MCF 10A (cell line): ENCODE measurements at regions of chr12 and their contacts with region 1.

Region 1: DNA sequence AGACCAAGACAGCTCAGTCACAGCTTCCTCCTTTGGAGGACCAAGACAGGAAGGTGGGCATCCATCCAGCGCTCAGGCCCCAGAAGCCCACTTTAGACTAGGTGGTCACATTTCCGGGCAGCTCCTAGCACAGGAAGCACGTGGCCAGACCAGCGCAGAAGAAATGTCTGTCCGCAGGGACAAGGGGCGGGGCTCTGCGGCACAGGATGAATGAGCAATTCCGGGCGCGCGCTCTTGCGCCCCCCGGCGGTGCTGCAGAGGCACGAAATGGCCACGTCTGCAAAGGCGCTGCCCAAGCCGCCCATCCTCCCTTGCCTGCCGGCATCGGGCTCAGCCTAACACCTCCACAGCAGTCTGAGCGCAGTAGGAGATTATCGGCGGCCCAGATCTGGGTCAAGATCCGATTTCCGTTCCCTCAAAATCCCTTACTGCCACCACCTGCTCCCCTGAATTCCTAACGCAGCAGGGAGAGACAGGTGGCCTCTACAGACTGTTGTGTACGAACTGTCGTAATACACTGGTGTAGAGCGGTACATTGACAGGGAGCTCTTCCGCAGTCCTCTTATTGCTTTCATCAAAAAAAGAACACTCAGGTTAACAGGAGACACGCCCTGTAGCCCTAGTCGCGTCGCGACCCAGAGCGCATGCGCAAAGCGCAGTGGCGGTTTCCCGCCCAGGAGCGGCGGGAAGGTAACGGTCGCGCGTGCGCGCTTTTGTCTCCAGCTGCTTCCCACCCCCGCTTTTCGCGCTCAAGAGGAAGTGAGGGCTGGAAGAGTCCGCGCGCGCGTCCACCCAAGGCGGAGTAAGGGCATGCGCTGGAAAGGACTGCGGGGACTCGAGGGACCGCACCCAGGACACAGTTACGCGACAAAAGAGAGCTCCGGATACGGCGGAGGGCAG is 794 bp downstream of the TUBA1B start:
- DNase-seq: peak; percentile 91
- H3K4me3 Mint-ChIP-seq: peak overlapping the region; percentile 94
- H3K27ac Mint-ChIP-seq: peak overlapping the region; percentile 96
- H3K4me1 Mint-ChIP-seq: no peaks in the 10 kb centered on the region
- H3K27me3 Mint-ChIP-seq: no peaks in the 10 kb centered on the region
- CTCF ChIP-seq: peak; percentile 91

Region 2: DNA sequence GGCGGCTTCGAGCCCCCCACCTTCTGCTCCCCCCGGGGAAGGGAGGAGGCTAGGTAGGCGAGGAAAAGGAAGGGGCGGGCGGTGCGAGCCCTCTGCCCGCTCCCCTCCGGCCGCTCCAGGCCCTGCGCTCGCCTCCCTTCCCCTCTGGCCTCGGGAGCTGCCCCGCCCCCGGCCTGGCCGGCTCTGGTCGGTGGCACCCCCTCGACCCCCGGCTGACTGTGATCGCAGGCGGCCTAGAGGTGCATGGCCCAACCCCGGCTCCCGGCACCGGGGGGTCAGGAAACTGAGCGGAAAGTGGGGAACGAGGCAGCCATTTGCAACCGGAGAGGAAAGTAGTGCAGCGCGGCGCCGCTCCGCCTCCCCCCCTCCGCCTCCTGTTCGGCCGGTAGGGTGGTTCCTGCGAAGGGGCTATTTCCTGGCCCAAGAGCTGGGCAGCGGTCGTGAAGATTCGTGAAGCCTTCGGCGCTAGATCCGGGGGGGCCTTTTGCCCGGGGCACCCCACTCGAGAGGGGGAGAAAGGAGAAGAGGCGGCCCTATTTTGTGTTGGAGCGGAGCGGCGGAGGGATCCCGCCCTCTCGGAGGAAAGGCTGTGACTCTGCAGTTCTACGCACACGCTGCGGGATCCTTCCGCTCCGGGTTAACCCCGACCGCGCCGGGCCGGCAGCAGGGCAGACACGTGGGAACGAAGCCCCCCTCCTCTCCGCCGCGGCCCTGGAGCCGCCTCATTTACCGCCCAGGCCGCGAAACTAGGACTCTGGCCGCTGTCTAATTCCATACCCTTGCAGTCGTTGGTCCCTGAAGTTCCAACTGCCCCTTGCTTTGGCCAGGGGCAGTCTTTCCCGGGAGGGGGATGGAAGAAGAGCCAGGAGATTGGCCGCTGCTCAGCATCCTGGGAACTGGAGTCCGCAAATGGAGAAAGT is 69.9 kb before region 1 on chr12 and contains the start of gene KMT2D:
- CTCF ChIA-PET with region 1: interaction called, 9 read pairs
- POLR2A ChIA-PET with region 1: interaction called, 58 read pairs
- intact Hi-C with region 1: loop called (anchors 2 kb)
- DNase-seq: peak; percentile 91
- H3K4me3 Mint-ChIP-seq: peak within 1 kb of the TSS; percentile 91
- H3K27ac Mint-ChIP-seq: peak within 1 kb of the TSS; percentile 89
- H3K4me1 Mint-ChIP-seq: peaks cover 32% of the 10 kb centered on the region
- H3K27me3 Mint-ChIP-seq: no peaks in the 10 kb centered on the region
- CTCF ChIP-seq: no peak
- total RNA-seq, gene KMT2D: 76.9 and 92.5 TPM in 2 replicates

Region 3: DNA sequence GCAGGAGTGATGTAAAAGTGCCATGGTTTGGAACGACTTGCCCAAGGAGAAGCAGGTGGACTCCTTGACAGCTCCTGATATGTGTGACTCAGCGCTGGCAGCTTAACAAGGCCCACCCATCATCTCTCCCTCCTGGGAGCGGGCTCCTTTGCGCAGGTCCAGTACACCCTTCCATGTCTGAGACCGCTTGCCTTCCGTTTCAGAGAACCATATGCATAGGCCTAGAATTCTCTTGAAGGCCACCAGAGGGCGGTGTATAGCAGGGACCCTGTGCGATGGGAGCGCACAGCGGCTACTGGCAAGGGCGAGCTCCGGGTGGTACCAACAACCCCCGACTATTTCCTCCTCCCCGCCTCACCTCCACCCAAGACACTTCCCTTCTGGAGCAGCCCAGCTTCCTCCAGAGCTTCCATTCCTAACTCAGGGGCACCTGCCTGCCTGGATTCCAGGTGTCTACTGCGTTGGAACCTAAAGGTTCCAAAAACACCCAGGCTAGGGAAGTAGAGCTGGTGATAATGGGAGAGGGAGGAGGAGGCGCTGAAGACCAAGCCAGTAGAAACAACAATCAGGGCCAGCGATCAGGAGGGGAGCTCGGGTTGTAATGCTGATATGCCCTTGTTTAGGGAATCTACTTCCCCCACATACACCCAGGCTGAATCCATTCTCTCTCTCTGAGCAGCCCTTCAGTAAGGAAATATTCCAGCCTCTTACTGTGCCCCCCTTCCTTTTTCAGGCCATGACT is 42.0 kb before region 1 on chr12:
- CTCF ChIA-PET with region 1: interaction called, 17 read pairs
- POLR2A ChIA-PET with region 1: interaction called, 19 read pairs
- intact Hi-C with region 1: no loop called
- DNase-seq: peak; percentile 93
- H3K4me3 Mint-ChIP-seq: no peak overlapping the region
- H3K27ac Mint-ChIP-seq: no peak overlapping the region
- H3K4me1 Mint-ChIP-seq: peaks cover 8% of the 10 kb centered on the region
- H3K27me3 Mint-ChIP-seq: no peaks in the 10 kb centered on the region
- CTCF ChIP-seq: peak; percentile 79

Region 4: DNA sequence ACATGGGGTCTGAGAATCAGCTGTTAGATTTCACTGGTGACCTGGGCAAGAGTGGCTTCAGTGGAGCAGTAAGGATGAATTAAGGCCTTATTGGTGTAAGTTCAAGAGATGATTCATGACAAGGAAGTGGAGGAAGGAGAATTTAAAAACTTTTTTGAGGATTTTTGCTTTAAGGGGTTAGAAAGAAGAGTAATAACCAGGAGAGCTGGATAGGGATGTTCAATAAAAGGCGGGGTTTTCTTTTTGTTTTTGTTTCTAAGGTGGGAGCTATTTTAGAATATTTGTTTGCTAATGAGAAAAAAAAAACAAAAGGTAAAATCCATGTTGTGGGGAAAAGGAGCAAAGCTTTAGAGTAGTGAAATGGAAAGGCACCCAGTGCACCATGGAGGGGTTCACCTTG is 16.0 kb after region 1 on chr12:
- CTCF ChIA-PET with region 1: interaction called, 4 read pairs
- POLR2A ChIA-PET with region 1: interaction called, 26 read pairs
- intact Hi-C with region 1: no loop called
- DNase-seq: no peak
- H3K4me3 Mint-ChIP-seq: no peak overlapping the region
- H3K27ac Mint-ChIP-seq: no peak overlapping the region
- H3K4me1 Mint-ChIP-seq: no peaks in the 10 kb centered on the region
- H3K27me3 Mint-ChIP-seq: no peaks in the 10 kb centered on the region
- CTCF ChIP-seq: no peak

Region 5: GRCh38 chr12:49200919-49201594 is 70.7 kb after region 1 on chr12:
- CTCF ChIA-PET with region 1: interaction called, 3 read pairs
- POLR2A ChIA-PET with region 1: interaction called, 26 read pairs
- intact Hi-C with region 1: no loop called
- DNase-seq: peak; percentile 83
- H3K4me3 Mint-ChIP-seq: no peak overlapping the region
- H3K27ac Mint-ChIP-seq: peak overlapping the region; percentile 77
- H3K4me1 Mint-ChIP-seq: peaks cover 16% of the 10 kb centered on the region
- H3K27me3 Mint-ChIP-seq: no peaks in the 10 kb centered on the region
- CTCF ChIP-seq: no peak

Region 6: DNA sequence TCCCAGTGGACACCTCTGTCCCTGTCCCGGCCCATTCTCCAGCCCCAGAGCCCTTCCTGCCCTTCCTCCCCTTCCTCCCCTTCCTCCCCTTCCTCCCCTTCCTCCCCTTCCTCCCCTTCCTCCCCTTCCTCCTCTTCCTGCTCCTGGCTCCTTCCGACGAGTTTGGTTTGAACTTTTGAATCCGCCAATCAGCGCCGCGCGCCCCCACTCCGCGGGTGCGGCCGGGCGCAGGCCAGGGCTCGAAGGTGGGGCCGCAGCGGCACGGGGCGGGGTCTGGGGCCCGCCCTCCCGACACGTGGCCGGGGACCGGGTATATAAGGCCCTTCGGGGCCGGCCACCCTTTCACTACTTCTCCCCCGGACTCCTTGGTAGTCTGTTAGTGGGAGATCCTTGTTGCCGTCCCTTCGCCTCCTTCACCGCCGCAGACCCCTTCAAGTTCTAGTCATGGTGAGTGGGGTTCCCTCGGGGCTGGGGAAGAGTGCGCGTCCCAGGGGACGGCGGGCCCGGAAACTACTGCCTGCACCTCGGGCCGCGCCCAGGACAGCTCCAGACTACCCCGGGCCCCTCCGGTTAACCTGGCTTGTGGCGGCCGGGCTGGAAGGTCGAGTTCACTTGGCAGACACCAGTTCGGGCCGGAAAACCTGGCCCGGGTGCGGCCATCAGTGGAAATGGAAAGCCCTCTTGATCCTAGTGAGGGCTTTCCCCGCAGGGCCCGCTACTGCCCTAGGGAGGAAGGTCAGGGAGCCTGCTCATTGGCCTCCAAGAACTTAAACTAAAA is 134.5 kb after region 1 on chr12 and contains the start of gene TUBA1C:
- CTCF ChIA-PET with region 1: interaction called, 4 read pairs
- POLR2A ChIA-PET with region 1: interaction called, 182 read pairs
- intact Hi-C with region 1: no loop called
- DNase-seq: peak; percentile 96
- H3K4me3 Mint-ChIP-seq: peak within 1 kb of the TSS; percentile 85
- H3K27ac Mint-ChIP-seq: peak within 1 kb of the TSS; percentile 97
- H3K4me1 Mint-ChIP-seq: peaks cover 31% of the 10 kb centered on the region
- H3K27me3 Mint-ChIP-seq: no peaks in the 10 kb centered on the region
- CTCF ChIP-seq: no peak
- total RNA-seq, gene TUBA1C: 253 and 303 TPM in 2 replicates